Panc1 (cell line): ENCODE measurements at regions of chr1 and their contacts with region 1.

Region 1: DNA sequence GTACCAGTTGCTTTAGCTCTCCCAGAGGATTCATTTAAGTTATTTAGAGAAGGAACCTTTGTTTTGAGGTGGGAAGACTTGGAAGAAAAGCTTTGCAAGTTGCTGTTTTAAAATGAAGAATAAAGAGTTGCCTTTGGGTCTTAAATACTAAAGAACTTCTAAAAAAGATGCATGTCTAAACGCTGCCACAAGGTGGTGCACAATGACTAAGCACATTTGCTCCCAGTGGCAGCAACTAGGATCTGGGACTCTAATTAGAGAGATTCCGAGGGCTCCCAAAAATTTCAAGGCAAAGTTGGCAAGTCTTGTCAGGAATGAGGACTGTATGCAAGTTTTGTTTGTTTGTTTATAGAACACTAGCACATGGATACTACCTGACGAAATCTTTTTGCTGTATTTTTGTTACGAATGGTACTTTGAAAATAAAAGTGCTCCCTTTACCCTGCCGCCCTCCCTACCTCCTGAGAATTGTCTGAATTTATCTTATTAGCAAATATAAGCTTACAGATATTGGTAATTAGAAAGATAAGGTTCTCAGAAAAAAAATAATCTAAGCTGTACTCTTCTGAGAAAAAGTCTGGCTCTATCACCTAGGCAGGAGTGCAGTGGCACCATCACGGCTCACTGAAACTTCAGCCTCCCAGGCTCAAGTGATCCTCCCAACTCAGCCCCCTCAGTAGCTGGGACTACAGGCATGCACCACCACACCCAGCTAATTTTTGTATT is 121.8 kb downstream of the HFM1 start:
- DNase-seq: peak; percentile 56
- ATAC-seq: peak; percentile 90
- H3K4me3 ChIP-seq: peak overlapping the region in 1 of 2 experiments; percentile 19; a peak in 1 of 4 replicates
- H3K27ac ChIP-seq: no peak overlapping the region
- H3K4me1 ChIP-seq: no peaks in the 10 kb centered on the region
- H3K27me3 ChIP-seq: peaks cover 4% of the 10 kb centered on the region; the same call in 1 of the 2 replicates
- CTCF ChIP-seq: peak; percentile 91

Region 2: DNA sequence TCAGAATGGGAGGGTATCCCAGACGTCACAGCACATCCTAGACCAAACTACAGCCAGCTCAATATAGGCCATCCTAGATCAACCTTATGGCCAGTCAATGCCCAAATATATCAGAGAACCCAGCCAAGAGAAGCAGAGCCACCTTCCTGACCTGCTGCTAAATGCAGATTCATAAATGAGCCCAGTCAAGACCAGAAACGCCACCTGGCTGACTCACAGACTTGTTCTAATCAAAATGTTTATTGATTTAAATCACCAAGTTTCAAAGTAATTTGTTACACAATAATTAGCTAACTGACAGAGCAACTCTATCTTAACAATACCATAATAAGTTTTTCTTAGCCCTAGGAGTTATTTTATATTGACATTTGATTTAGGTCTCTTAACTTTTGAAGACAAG is 289.6 kb before region 1 on chr1:
- CTCF ChIA-PET with region 1: no interaction called
- POLR2A ChIA-PET with region 1: no interaction called
- in situ Hi-C with region 1: no loop called
- intact Hi-C with region 1: no loop called
- DNase-seq: no peak
- ATAC-seq: no peak
- H3K4me3 ChIP-seq: no peak overlapping the region
- H3K27ac ChIP-seq: no peak overlapping the region
- H3K4me1 ChIP-seq: no peaks in the 10 kb centered on the region
- H3K27me3 ChIP-seq: no peaks in the 10 kb centered on the region
- CTCF ChIP-seq: no peak

Region 3: GRCh38 chr1:91104712-91105111 is 178.1 kb before region 1 on chr1:
- CTCF ChIA-PET with region 1: no interaction called
- POLR2A ChIA-PET with region 1: no interaction called
- in situ Hi-C with region 1: no loop called
- intact Hi-C with region 1: no loop called
- DNase-seq: no peak
- ATAC-seq: no peak
- H3K4me3 ChIP-seq: no peak overlapping the region
- H3K27ac ChIP-seq: no peak overlapping the region
- H3K4me1 ChIP-seq: no peaks in the 10 kb centered on the region
- H3K27me3 ChIP-seq: no peaks in the 10 kb centered on the region
- CTCF ChIP-seq: no peak

Region 4: GRCh38 chr1:91404151-91405012 is 121.5 kb after region 1 on chr1 and contains the start of gene HFM1:
- CTCF ChIA-PET with region 1: no interaction called
- POLR2A ChIA-PET with region 1: no interaction called
- in situ Hi-C with region 1: no loop called
- intact Hi-C with region 1: loop called (anchors 1 kb)
- DNase-seq: no peak
- ATAC-seq: peak; percentile 100
- H3K4me3 ChIP-seq: peak within 1 kb of the TSS; percentile 66 to 73
- H3K27ac ChIP-seq: peak within 1 kb of the TSS; percentile 49; the same call in 1 of the 2 replicates
- H3K4me1 ChIP-seq: peaks cover 3% of the 10 kb centered on the region; the same call in 1 of the 2 replicates
- H3K27me3 ChIP-seq: peaks cover 17% of the 10 kb centered on the region
- CTCF ChIP-seq: peak; percentile 46
- total RNA-seq, gene HFM1: 0.39 TPM

Region 5: GRCh38 chr1:91500756-91501522 is 218.1 kb after region 1 on chr1 and contains the start of gene CDC7:
- CTCF ChIA-PET with region 1: no interaction called
- POLR2A ChIA-PET with region 1: no interaction called
- in situ Hi-C with region 1: no loop called
- intact Hi-C with region 1: loop called (anchors 5 kb)
- DNase-seq: peak; percentile 93
- ATAC-seq: peak; percentile 94
- H3K4me3 ChIP-seq: peak within 1 kb of the TSS; percentile 66 to 78
- H3K27ac ChIP-seq: peak within 1 kb of the TSS; percentile 96
- H3K4me1 ChIP-seq: peaks cover 18% of the 10 kb centered on the region
- H3K27me3 ChIP-seq: no peaks in the 10 kb centered on the region
- CTCF ChIP-seq: peak; percentile 73
- total RNA-seq, gene CDC7: 30.1 TPM

Region 6: GRCh38 chr1:91924146-91924545 is 641.3 kb after region 1 on chr1:
- CTCF ChIA-PET with region 1: no interaction called
- POLR2A ChIA-PET with region 1: no interaction called
- in situ Hi-C with region 1: no loop called
- intact Hi-C with region 1: loop called (anchors 10 kb)
- DNase-seq: no peak
- ATAC-seq: no peak
- H3K4me3 ChIP-seq: no peak overlapping the region
- H3K27ac ChIP-seq: no peak overlapping the region
- H3K4me1 ChIP-seq: no peaks in the 10 kb centered on the region
- H3K27me3 ChIP-seq: no peaks in the 10 kb centered on the region
- CTCF ChIP-seq: no peak